AG04450 (cell line): ENCODE measurements at regions of chr1 and their contacts with region 1.

Region 1: GRCh38 chr1:236854602-236854978 is 59.5 kb downstream of the MTR start:
- DNase-seq: peak; percentile 8
- H3K4me3 ChIP-seq: no peak overlapping the region
- H3K27ac ChIP-seq: no peak overlapping the region
- H3K27me3 ChIP-seq: no peaks in the 10 kb centered on the region
- CTCF ChIP-seq: no peak

Region 2: GRCh38 chr1:236836157-236836556 is 18.4 kb before region 1 on chr1:
- CTCF ChIA-PET with region 1: no interaction called
- POLR2A ChIA-PET with region 1: no interaction called
- DNase-seq: no peak
- H3K4me3 ChIP-seq: no peak overlapping the region
- H3K27ac ChIP-seq: no peak overlapping the region
- H3K27me3 ChIP-seq: no peaks in the 10 kb centered on the region
- CTCF ChIP-seq: no peak

Region 3: DNA sequence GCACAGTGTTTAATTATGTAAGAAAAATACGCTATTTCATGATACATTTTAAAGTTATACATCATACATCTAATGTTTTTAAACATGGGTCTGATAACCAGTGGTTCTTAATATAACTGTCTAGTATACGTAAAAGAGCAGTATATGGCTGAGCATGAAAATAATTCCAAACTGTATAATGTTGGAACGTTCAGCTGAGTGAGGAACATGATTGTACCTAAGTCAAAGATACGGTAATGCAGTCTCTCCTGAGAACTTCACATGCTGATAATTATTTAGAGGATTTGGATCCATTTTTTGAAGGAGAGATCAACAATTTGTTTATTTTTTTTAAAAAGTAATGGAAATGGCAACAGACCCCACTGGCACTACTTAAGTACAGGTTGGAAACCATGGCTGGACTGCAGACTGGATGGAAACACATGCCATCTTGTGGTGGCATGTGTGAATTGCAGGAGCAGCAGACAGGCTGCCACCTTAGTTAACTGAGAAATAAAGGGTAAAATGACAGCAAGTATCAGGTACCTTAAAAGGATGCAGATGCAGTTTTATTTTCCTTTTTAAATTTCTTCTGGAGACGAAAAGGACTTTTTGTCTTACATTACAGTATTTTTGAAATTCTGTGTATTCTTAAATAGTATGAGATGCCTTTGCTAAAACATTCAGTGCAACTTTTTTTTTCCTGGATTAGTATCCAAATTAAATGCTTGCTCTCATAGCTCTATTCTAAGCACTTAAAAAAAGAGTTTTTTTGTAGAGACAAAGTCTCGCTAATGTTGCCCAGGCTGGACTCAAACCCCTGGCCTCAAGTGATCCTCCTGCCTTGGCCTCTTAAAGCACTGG is 14.3 kb after region 1 on chr1:
- CTCF ChIA-PET with region 1: interaction called, 13 read pairs
- POLR2A ChIA-PET with region 1: no interaction called
- DNase-seq: peak; percentile 45
- H3K4me3 ChIP-seq: no peak overlapping the region
- H3K27ac ChIP-seq: no peak overlapping the region
- H3K27me3 ChIP-seq: no peaks in the 10 kb centered on the region
- CTCF ChIP-seq: peak; percentile 98

Region 4: DNA sequence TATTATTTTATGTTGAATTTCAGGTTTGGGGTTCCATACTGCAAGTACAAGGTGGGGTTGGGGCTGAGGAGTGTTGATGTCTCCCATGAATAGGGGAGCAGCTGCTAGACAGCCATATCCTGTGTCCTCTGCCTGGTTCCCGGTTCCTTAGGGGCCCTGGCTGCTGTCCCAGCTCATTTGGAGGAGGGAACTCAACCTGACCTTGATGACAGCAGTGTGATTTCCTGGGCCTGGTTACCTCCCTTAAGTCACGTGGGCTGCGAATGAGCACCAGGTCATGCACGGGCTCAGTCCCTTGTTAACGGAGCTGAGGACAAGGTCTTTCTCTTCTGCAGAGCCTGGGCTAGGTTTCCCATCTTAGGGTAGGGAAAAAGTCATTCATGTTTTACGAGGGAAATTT is 25.6 kb after region 1 on chr1:
- CTCF ChIA-PET with region 1: no interaction called
- POLR2A ChIA-PET with region 1: no interaction called
- DNase-seq: no peak
- H3K4me3 ChIP-seq: no peak overlapping the region
- H3K27ac ChIP-seq: no peak overlapping the region
- H3K27me3 ChIP-seq: no peaks in the 10 kb centered on the region
- CTCF ChIP-seq: no peak